Thyroid gland (tissue), 4 donors: ENCODE measurements at regions of chr6 and their contacts with region 1.

Region 1: GRCh38 chr6:165662749-165663282 is at the start of gene PDE10A:
- DNase-seq: peak; percentile 83 to 88
- H3K4me3 ChIP-seq: peak within 1 kb of the TSS; percentile 5 to 92 (median 55)
- H3K27ac ChIP-seq: peak within 1 kb of the TSS; percentile 70 to 91 (median 76)
- H3K4me1 ChIP-seq: peaks cover 16 to 17% of the 10 kb centered on the region in 2 donors
- H3K27me3 ChIP-seq: no peaks in the 10 kb centered on the region
- CTCF ChIP-seq: no peak
- POLR2A ChIP-seq: peak; percentile 4 to 59
- total RNA-seq, gene PDE10A: 17.1 to 25.9 (median 20.7) TPM

Region 2: DNA sequence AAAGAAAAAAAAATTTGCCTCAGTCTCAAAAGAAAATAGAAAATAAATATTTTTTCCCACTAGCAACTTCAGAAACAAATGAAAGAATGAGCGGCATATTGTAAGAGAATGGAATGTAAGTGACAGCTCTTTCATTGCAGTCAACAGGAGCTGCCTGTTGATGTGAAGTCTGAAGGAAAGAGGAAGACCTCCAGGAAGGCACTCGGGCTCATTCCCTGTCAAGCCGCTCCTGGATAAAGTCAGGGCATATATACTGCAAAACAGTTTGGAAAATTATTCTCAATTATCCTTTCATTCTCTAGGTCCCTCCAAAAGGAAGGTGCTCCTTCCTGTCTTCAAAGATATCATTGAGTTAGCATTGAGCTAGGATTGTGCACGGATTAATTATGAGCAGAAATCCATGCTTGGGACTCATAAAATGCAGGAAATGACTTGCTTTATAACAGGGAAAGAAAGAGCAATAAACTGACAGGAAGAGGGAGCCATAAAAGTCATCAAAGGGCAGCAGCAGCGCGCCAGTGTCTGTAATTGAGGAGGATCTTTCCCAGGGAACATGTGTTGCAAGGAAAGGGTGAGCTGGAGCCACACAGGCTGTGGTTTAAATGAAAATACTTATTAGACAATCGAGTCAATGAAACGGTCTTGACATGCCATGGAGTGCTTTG is 571.6 kb before region 1 on chr6:
- intact Hi-C with region 1: no loop called
- DNase-seq: no peak
- H3K4me3 ChIP-seq: no peak overlapping the region
- H3K27ac ChIP-seq: no peak overlapping the region
- H3K4me1 ChIP-seq: no peaks in the 10 kb centered on the region
- H3K27me3 ChIP-seq: no peaks in the 10 kb centered on the region
- CTCF ChIP-seq: no peak
- POLR2A ChIP-seq: no peak

Region 3: GRCh38 chr6:165439928-165440554 is 222.8 kb before region 1 on chr6:
- intact Hi-C with region 1: loop called (anchors 10 kb)
- DNase-seq: no peak
- H3K4me3 ChIP-seq: no peak overlapping the region
- H3K27ac ChIP-seq: no peak overlapping the region
- H3K4me1 ChIP-seq: peaks cover 0 to 4% of the 10 kb centered on the region in 2 donors
- H3K27me3 ChIP-seq: no peaks in the 10 kb centered on the region
- CTCF ChIP-seq: peak; percentile 22 to 76 (median 46)
- POLR2A ChIP-seq: no peak